Activated naive CD4-positive, alpha-beta T cell treated with anti-CD3 and anti-CD28 coated beads for 36 hours (primary cell): ENCODE measurements at regions of chr16 and their contacts with region 1.

Region 1: DNA sequence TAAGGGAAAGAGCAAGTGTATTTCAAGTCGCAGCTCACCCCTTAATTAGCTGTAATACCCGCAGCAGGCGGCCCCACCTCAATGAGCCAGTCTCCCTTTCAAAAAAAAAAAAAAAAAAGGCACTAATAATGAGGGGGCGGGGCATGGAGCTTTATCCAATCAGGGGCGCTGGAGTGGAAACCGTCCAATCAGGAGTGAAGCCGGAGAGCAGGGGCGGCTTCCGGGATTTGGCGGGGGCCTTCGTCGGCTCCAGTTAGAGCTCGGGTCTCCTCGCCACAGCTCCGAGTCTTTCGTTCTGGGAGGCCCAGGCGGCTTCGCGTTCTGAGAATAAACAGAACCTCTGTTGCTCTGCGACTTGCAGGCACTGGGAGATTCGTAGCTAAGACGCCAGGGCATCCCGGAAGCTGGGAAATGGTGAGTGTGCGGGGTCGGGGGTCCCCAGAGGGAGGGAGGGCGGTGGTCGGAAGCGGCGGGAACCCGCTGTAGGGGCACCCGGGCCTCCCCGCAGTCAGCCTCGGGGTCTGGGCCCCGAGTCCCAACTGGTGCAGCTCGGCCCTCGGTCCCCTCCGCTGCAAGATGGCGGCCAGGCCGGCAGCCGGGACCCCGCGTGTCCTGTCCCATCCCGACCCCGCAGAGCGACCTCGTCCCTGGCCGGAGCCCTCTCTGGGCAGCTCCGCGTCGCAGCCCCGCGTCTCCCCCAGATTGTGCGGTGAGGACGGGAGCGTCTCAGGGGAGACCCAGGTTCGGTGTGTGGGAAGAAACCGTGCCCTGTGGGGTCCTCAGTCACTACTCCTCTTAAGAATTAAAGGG is at the start of gene ZNF267:
- DNase-seq: peak; percentile 97
- H3K4me3 Mint-ChIP-seq: peak within 1 kb of the TSS; percentile 88
- H3K27ac Mint-ChIP-seq: peak within 1 kb of the TSS; percentile 96
- H3K4me1 Mint-ChIP-seq: peaks cover 79% of the 10 kb centered on the region
- H3K27me3 Mint-ChIP-seq: no peaks in the 10 kb centered on the region
- total RNA-seq, gene ZNF267: 58.7 to 59.7 TPM

Region 2: DNA sequence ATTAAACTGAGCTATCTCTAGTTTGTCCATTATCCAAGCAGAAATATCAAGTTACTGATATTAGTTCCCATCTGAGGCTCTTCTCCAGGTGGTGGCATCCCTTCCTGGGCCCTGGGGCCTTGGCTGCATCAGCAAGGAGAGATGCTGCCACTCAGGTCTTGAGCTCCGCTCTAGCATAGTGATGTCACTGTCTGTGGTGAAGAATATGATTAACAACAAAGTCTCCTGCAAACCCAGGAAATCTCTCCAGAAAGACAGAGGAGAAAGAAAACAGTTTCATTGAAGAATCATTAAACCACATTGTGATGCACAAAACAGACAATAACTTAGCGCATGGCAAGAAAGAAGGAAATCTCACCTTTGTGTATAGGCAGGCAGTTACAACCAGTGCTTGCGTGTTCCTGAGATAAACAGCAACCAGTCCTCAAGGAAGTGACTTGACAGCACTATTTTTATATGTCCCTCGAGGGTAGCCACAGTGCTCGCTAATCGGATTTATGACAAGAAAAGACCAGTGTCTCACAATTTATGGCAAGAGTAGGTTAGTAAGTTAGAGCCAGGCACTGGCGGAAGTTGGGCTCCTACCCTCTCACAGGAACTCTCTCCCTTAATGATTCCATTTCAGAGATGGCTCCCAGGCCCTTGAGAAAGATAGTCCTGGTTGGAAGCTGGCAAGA is 195.0 kb before region 1 on chr16:
- CTCF ChIA-PET with region 1: no interaction called
- intact Hi-C with region 1: no loop called
- DNase-seq: no peak
- H3K4me3 Mint-ChIP-seq: no peak overlapping the region
- H3K27ac Mint-ChIP-seq: no peak overlapping the region
- H3K4me1 Mint-ChIP-seq: peaks cover 6% of the 10 kb centered on the region
- H3K27me3 Mint-ChIP-seq: peaks cover 6% of the 10 kb centered on the region

Region 3: DNA sequence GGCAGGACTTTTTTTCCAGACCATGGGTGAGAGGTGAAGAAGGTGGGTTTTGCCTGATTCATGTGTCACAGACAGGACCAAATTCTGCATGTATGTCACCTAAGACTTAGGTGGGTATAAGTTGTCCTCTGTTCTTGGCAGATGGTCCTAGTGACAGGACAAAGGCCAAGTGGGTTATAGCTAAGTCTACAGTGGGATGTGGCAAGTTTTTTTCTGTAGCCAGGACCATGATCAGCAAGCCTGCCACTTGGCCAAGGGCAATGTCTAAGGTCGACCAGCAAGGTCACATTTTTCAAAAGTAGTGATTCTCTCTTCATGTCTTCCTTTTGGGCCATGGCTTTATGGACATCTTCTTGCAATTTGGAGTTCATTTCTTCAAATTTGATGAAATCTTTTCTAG is 20.1 kb after region 1 on chr16:
- CTCF ChIA-PET with region 1: interaction called, 3 read pairs
- intact Hi-C with region 1: loop called (anchors 2 kb)
- DNase-seq: no peak
- H3K4me3 Mint-ChIP-seq: no peak overlapping the region
- H3K27ac Mint-ChIP-seq: peak overlapping the region; percentile 59
- H3K4me1 Mint-ChIP-seq: peaks cover 60% of the 10 kb centered on the region
- H3K27me3 Mint-ChIP-seq: no peaks in the 10 kb centered on the region